Astrocyte of the cerebellum (primary cell): ENCODE measurements at regions of chr1 and their contacts with region 1.

Region 1: DNA sequence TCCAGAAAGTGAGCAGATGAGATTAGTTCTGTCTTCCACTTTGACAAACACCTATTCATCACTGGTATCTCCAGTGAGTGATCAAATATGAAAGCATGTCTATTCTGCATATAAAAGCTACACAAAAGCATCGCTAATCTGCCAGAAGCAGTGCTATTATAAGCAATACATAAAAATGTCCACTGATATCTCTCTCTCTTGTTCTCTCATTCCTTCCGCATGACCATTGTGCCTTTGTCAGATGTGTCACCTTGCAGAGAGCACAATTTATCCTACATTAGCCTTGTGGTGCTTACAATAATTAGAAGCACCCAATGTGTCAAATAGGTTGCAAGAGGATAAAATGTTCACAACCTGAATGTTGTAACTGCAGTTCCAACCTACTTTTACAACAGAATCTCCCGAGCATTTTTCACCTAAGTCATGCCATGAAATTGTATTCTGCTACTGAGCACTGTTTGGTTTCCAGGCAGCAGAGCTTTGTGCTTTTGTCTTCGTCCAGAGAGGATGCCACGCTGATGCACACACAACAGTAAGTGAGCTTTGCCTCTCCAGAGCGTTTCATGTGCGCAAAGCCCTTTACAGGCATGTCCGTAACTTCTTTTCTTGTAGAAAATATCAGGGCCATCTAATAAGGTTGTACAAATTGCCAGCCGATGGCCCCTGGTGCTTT is 198.7 kb upstream of the PLD5 start:
- DNase-seq: no peak
- H3K4me3 ChIP-seq: no peak overlapping the region
- CTCF ChIP-seq: no peak

Region 2: DNA sequence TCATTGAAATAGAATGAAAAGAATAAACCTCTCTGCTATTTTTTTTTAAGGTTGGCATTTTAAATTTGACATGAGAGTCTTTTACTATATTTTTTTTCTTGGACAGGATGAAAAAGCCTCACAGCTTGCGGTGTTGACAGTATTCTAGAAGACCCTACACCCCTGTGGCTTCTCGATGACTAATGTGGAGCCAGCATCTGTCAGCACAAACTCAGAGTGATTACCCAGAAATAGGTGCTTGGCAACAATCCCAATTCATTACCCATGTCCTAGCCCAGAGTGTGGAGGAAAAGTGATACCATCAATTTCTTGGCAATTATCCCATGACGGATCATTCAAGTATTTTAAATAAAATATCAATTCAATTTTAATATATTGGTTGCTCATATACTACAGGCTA is 537.4 kb before region 1 on chr1:
- in situ Hi-C with region 1: no loop called
- DNase-seq: no peak
- H3K4me3 ChIP-seq: no peak overlapping the region
- CTCF ChIP-seq: no peak

Region 3: DNA sequence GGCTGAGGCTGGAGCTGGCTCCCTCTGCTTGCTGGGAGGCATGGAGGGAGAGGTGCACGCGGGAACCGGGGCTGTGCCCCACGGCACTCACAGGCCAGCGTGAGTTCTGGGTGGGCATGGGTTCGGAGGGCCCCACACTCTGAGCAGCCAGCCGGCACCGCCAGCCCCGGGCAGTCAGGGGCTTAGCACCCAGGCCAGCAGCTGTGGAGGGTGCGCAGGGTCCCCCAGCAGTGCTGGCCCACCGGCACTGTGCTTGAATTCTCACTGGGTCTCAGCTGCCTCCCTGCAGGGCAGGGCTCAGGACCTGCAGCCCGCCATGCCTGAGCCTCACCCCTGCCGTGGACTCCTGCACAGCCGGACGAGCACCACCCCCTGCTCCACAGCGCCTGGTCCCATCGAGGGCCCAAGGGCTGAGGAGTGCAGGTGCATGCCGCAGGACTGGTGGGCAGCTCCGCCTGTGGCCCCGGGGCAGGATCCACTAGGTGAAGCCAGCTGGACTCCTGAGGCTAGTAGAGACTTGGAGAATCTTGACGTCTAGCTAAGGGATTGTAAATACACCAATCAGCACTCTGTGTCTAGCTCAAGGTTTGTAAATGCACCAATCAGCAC is 33.7 kb before region 1 on chr1:
- in situ Hi-C with region 1: loop called (anchors 5 kb)
- DNase-seq: no peak
- H3K4me3 ChIP-seq: no peak overlapping the region
- CTCF ChIP-seq: no peak